ENCODE measurements at regions of chr13 and their contacts with region 1.

Region 1: GRCh38 chr13:30355384-30355699 is 48.0 kb upstream of the KATNAL1 start:
- DNase-seq: peak; percentile 12 to 76 (median 60)
- ATAC-seq: peak; percentile 96
- H3K4me3 ChIP-seq: no peak overlapping the region
- H3K4me3 Mint-ChIP-seq: peak overlapping the region; percentile 47
- H3K27ac ChIP-seq: no peak overlapping the region
- H3K27ac Mint-ChIP-seq: peak overlapping the region; percentile 37
- H3K4me1 ChIP-seq: peaks cover 18% of the 10 kb centered on the region
- H3K4me1 Mint-ChIP-seq: peaks cover 25% of the 10 kb centered on the region
- H3K27me3 ChIP-seq: no peaks in the 10 kb centered on the region
- H3K27me3 Mint-ChIP-seq: no peaks in the 10 kb centered on the region
- CTCF ChIP-seq: peak; percentile 64

Region 2: GRCh38 chr13:30395192-30396084 is 40.1 kb after region 1 on chr13:
- CTCF ChIA-PET with region 1: no interaction called
- POLR2A ChIA-PET with region 1: no interaction called
- intact Hi-C with region 1: loop called (anchors 5 to 10 kb)
- DNase-seq: peak; percentile 44 to 88 (median 79)
- ATAC-seq: peak; percentile 62
- H3K4me3 ChIP-seq: peak overlapping the region; percentile 60 to 80
- H3K4me3 Mint-ChIP-seq: peak overlapping the region; percentile 89
- H3K27ac ChIP-seq: peak overlapping the region; percentile 83 to 84
- H3K27ac Mint-ChIP-seq: peak overlapping the region; percentile 95
- H3K4me1 ChIP-seq: peaks cover 21% of the 10 kb centered on the region
- H3K4me1 Mint-ChIP-seq: peaks cover 50% of the 10 kb centered on the region
- H3K27me3 ChIP-seq: no peaks in the 10 kb centered on the region
- H3K27me3 Mint-ChIP-seq: no peaks in the 10 kb centered on the region
- CTCF ChIP-seq: no peak

Region 3: DNA sequence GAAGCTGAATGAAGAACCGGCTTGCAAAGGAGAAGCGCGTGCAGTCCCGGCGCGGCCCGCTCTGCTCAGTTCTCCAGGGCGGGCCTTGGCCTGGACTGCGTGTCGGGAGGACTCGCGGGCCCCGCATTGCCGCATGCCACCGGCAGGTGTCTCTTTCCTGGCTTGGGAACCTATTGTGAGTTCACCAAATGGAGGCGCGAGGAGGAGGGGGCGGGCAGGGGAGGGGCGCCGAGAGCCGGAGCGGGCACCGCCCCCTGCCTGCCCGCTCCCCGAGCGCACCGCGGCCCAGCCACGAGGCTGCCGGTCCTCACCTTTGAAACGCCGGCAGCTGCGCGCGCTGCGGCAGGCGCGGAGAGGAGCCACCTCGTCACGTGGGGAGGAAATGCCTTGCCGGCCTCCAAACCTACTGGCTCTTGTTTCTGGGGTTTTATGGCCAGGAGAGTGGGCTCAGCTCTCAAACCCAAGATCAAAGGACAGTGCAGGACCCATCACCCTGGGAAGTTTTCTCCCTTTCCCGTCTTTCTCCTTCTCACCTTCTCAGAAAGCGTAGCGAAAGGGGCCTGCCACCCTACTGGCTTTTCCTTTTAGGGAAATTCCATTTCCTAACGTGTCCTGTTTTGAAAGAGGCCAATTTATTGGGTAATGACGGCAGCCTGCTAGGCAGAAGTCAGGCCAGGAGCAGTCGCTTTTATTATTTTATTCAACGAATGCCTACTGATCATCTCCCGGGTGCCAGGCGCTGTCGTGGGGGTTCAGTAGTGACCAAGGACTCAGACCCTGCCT is 53.2 kb after region 1 on chr13:
- CTCF ChIA-PET with region 1: interaction called, 5 read pairs
- POLR2A ChIA-PET with region 1: no interaction called
- intact Hi-C with region 1: loop called in 1 of 2 experiments (anchors 10 kb)
- DNase-seq: peak; percentile 82 to 94 (median 90)
- ATAC-seq: peak; percentile 94
- H3K4me3 ChIP-seq: peak overlapping the region; percentile 31 to 39
- H3K4me3 Mint-ChIP-seq: peak overlapping the region; percentile 72
- H3K27ac ChIP-seq: peak overlapping the region in 1 of 2 experiments; percentile 67
- H3K27ac Mint-ChIP-seq: peak overlapping the region; percentile 86
- H3K4me1 ChIP-seq: peaks cover 14% of the 10 kb centered on the region
- H3K4me1 Mint-ChIP-seq: peaks cover 27% of the 10 kb centered on the region
- H3K27me3 ChIP-seq: no peaks in the 10 kb centered on the region
- H3K27me3 Mint-ChIP-seq: no peaks in the 10 kb centered on the region
- CTCF ChIP-seq: peak; percentile 74

Region 4: GRCh38 chr13:30422054-30422839 is 66.9 kb after region 1 on chr13 and contains the start of gene UBE2L5:
- CTCF ChIA-PET with region 1: no interaction called
- POLR2A ChIA-PET with region 1: no interaction called
- intact Hi-C with region 1: loop called in 1 of 2 experiments (anchors 5 kb)
- DNase-seq: peak; percentile 31 to 82 (median 59)
- ATAC-seq: peak; percentile 88
- H3K4me3 ChIP-seq: peak within 1 kb of the TSS; percentile 41 to 58
- H3K4me3 Mint-ChIP-seq: peak within 1 kb of the TSS; percentile 88
- H3K27ac ChIP-seq: peak within 1 kb of the TSS; percentile 14 to 24
- H3K27ac Mint-ChIP-seq: peak within 1 kb of the TSS; percentile 82
- H3K4me1 ChIP-seq: peaks cover 4% of the 10 kb centered on the region
- H3K4me1 Mint-ChIP-seq: peaks cover 22% of the 10 kb centered on the region
- H3K27me3 ChIP-seq: no peaks in the 10 kb centered on the region
- H3K27me3 Mint-ChIP-seq: no peaks in the 10 kb centered on the region
- CTCF ChIP-seq: no peak
- total RNA-seq, gene UBE2L5: not detected

Region 5: DNA sequence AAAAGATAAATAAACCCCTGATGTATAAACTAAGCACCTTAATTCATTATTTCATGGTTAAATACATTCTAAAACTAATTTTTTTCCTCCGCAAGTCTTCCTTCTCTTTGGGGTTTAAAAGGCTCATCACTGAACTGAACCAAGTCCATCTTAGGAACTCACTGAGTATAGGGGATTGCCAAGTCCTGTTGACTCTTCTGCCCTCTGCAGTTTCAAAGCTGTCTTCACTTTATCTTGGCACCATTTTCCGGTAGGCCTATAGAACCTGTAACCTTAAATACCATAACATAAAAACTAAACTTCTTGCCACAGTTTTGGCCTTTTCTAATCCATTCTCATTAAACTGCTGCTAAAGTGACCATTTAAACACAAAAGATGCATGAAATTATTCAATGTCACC is 195.8 kb after region 1 on chr13:
- CTCF ChIA-PET with region 1: interaction called, 3 read pairs
- POLR2A ChIA-PET with region 1: no interaction called
- intact Hi-C with region 1: loop called (anchors 1 to 5 kb)
- DNase-seq: peak in 3 of 9 experiments; percentile 11 to 67 (median 52)
- ATAC-seq: peak; percentile 83
- H3K4me3 ChIP-seq: no peak overlapping the region
- H3K4me3 Mint-ChIP-seq: no peak overlapping the region
- H3K27ac ChIP-seq: no peak overlapping the region
- H3K27ac Mint-ChIP-seq: no peak overlapping the region
- H3K4me1 ChIP-seq: no peaks in the 10 kb centered on the region
- H3K4me1 Mint-ChIP-seq: peaks cover 5% of the 10 kb centered on the region
- H3K27me3 ChIP-seq: no peaks in the 10 kb centered on the region
- H3K27me3 Mint-ChIP-seq: no peaks in the 10 kb centered on the region
- CTCF ChIP-seq: peak; percentile 33

Region 6: GRCh38 chr13:30572859-30573275 is 217.5 kb after region 1 on chr13:
- CTCF ChIA-PET with region 1: interaction called, 3 read pairs
- POLR2A ChIA-PET with region 1: no interaction called
- intact Hi-C with region 1: loop called (anchors 1 to 5 kb)
- DNase-seq: peak in 4 of 9 experiments; percentile 12 to 72 (median 40)
- ATAC-seq: peak; percentile 57
- H3K4me3 ChIP-seq: peak overlapping the region; percentile 23 to 51
- H3K4me3 Mint-ChIP-seq: peak overlapping the region; percentile 75
- H3K27ac ChIP-seq: peak overlapping the region; percentile 58 to 72
- H3K27ac Mint-ChIP-seq: peak overlapping the region; percentile 91
- H3K4me1 ChIP-seq: peaks cover 27% of the 10 kb centered on the region
- H3K4me1 Mint-ChIP-seq: peaks cover 32% of the 10 kb centered on the region
- H3K27me3 ChIP-seq: no peaks in the 10 kb centered on the region
- H3K27me3 Mint-ChIP-seq: no peaks in the 10 kb centered on the region
- CTCF ChIP-seq: peak; percentile 44

Measured in CD8-positive, alpha-beta T cell (primary cell).